Activated CD4-positive, alpha-beta T cell treated with anti-CD3 and anti-CD28 coated beads, Interleukin-2, amount 10 ng/mL, durations not matched to agents 7 days and 5 days (primary cell): ENCODE measurements at regions of chr11 and their contacts with region 1.

Region 1: DNA sequence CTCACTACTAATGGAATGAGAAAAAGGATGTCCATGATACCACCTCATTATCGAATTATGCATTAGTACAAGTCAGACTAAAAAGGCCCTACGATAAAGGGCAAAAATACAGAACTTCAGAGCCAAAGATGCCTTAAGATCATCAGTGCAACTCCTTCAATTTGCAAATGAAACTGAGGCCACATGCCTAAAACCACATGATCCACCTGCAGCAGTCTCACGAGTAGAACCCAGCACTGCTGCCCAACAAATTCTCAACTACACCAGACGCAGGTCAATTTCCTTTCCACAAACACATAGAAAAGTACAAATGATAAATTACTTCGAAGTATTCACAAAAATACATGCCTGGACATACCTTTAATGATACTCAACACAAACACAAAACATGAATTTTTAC is 20.1 kb downstream of the KMT5B start:
- DNase-seq: no peak
- H3K4me3 Mint-ChIP-seq: no peak overlapping the region
- H3K27ac Mint-ChIP-seq: no peak overlapping the region
- H3K4me1 Mint-ChIP-seq: peaks cover 7% of the 10 kb centered on the region
- H3K27me3 Mint-ChIP-seq: no peaks in the 10 kb centered on the region

Region 2: GRCh38 chr11:68150039-68150438 is 43.0 kb before region 1 on chr11:
- CTCF ChIA-PET with region 1: no interaction called
- POLR2A ChIA-PET with region 1: no interaction called
- DNase-seq: no peak
- H3K4me3 Mint-ChIP-seq: no peak overlapping the region
- H3K27ac Mint-ChIP-seq: no peak overlapping the region
- H3K4me1 Mint-ChIP-seq: no peaks in the 10 kb centered on the region
- H3K27me3 Mint-ChIP-seq: no peaks in the 10 kb centered on the region

Region 3: GRCh38 chr11:68181719-68182451 is 11.1 kb before region 1 on chr11:
- CTCF ChIA-PET with region 1: no interaction called
- POLR2A ChIA-PET with region 1: interaction called, 16 read pairs
- DNase-seq: no peak
- H3K4me3 Mint-ChIP-seq: no peak overlapping the region
- H3K27ac Mint-ChIP-seq: no peak overlapping the region
- H3K4me1 Mint-ChIP-seq: no peaks in the 10 kb centered on the region
- H3K27me3 Mint-ChIP-seq: no peaks in the 10 kb centered on the region

Region 4: DNA sequence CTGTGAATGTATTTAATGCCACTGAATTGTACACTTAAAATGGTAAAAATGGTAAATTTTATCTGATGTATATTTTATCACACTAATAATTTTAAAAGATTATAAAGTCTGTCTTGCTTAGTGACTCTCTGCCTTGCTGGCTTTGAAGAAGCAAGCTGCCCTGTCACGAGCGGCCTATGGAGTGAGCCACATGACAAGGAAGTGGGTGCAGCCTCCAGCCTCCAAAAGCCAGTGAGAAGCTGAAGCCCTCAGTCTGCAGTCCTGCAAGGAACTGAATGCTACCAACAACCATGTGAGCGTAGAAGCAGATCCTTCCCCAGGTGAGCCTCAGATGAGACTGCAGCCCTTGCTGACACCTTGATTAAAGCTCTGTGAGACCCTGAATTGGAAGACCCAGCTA is 58.7 kb after region 1 on chr11:
- CTCF ChIA-PET with region 1: no interaction called
- POLR2A ChIA-PET with region 1: no interaction called
- DNase-seq: no peak
- H3K4me3 Mint-ChIP-seq: no peak overlapping the region
- H3K27ac Mint-ChIP-seq: no peak overlapping the region
- H3K4me1 Mint-ChIP-seq: no peaks in the 10 kb centered on the region
- H3K27me3 Mint-ChIP-seq: peaks cover 2% of the 10 kb centered on the region